IMR-90 (cell line): ENCODE measurements at regions of chr13 and their contacts with region 1.

Region 1: GRCh38 chr13:87274209-87274819 is 396.9 kb upstream of the SLITRK5 start:
- DNase-seq: peak; percentile 47
- ATAC-seq: peak; percentile 83
- H3K4me3 ChIP-seq: no peak overlapping the region
- H3K27ac ChIP-seq: no peak overlapping the region
- H3K4me1 ChIP-seq: no peaks in the 10 kb centered on the region
- H3K27me3 ChIP-seq: no peaks in the 10 kb centered on the region
- CTCF ChIP-seq: peak; percentile 77
- POLR2A ChIP-seq: no peak
- RAD21 ChIP-seq: peak; percentile 83

Region 2: DNA sequence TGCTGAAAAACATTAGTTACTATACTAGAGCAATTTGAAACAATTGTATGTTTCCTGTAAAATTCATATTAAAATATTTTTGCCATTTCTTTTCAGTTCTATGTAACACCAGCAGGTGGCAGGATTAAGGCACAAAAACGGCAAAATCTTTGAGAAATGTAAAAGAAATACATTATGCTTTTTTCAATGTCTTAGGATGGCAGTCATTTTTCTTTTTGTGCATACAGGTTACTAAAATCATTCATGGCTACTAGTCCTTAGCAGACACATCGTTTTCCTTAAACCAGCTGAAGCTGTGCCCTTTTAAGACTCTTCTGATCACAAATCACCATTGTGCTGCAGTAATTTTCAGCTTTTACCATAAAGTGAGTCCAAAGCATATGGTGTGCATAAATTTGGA is 403.9 kb before region 1 on chr13:
- CTCF ChIA-PET with region 1: interaction called, 40 read pairs
- POLR2A ChIA-PET with region 1: interaction called, 4 read pairs
- dilution Hi-C with region 1: no loop called
- in situ Hi-C with region 1: loop called (anchors 5 kb)
- intact Hi-C with region 1: loop called (anchors 1 kb)
- DNase-seq: peak; percentile 43
- ATAC-seq: peak; percentile 42
- H3K4me3 ChIP-seq: no peak overlapping the region
- H3K27ac ChIP-seq: no peak overlapping the region
- H3K4me1 ChIP-seq: no peaks in the 10 kb centered on the region
- H3K27me3 ChIP-seq: no peaks in the 10 kb centered on the region
- CTCF ChIP-seq: peak; percentile 72
- POLR2A ChIP-seq: no peak
- RAD21 ChIP-seq: peak; percentile 71

Region 3: GRCh38 chr13:86974995-86975328 is 299.4 kb before region 1 on chr13:
- CTCF ChIA-PET with region 1: interaction called, 6 read pairs
- POLR2A ChIA-PET with region 1: no interaction called
- dilution Hi-C with region 1: no loop called
- in situ Hi-C with region 1: no loop called
- intact Hi-C with region 1: loop called (anchors 1 kb)
- DNase-seq: no peak
- ATAC-seq: no peak
- H3K4me3 ChIP-seq: no peak overlapping the region
- H3K27ac ChIP-seq: no peak overlapping the region
- H3K4me1 ChIP-seq: 0 out of 2 replicates have a peak, but pooled peaks cover 1% of the 10 kb centered on the region
- H3K27me3 ChIP-seq: no peaks in the 10 kb centered on the region
- CTCF ChIP-seq: 0 out of 2 replicates have a peak, but pooled peaks have one; percentile 19
- POLR2A ChIP-seq: no peak
- RAD21 ChIP-seq: 0 out of 2 replicates have a peak, but pooled peaks have one; percentile 24

Region 4: GRCh38 chr13:87089391-87089790 is 184.9 kb before region 1 on chr13:
- CTCF ChIA-PET with region 1: no interaction called
- POLR2A ChIA-PET with region 1: no interaction called
- dilution Hi-C with region 1: no loop called
- in situ Hi-C with region 1: no loop called
- intact Hi-C with region 1: no loop called
- DNase-seq: peak; percentile 95
- ATAC-seq: peak; percentile 48
- H3K4me3 ChIP-seq: no peak overlapping the region
- H3K27ac ChIP-seq: no peak overlapping the region
- H3K4me1 ChIP-seq: peaks cover 4% of the 10 kb centered on the region; the same call in 1 of the 2 replicates
- H3K27me3 ChIP-seq: no peaks in the 10 kb centered on the region
- CTCF ChIP-seq: no peak
- POLR2A ChIP-seq: no peak
- RAD21 ChIP-seq: no peak

Region 5: DNA sequence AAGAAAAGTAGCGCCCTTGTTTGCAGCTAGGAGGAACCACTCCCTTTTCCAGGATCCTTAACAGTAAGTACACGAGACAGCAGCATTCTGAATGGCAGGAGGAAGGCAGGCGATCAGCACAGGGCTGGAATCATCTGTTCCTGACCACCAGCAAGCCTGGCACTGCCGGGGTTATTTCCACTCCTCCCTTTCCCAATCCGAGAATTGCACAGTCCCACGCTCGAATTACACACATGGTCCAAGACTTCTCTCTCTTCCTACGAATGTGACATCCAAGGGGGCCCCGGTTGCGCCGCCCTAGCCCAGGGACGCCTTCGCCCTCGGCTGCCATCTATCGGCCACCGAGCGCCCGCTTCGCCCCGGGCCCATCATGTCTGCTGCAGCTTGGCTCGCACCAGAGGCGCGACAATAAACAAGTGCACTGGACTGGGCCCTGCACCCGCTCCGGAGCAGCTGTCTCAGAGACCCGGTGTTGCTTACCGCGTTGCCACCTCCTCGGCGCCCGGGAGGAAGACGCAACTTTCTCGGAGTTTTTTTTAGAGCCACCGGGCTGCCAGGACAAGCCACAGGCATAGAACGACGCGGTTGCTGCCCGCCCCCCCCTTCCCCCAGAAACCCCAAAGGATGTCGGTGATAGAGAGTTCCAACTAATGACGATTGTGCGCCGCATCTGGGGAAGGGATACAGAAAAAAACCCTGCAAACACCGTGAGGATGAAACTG is 396.9 kb after region 1 on chr13 and contains the start of gene SLITRK5:
- CTCF ChIA-PET with region 1: no interaction called
- POLR2A ChIA-PET with region 1: no interaction called
- dilution Hi-C with region 1: no loop called
- in situ Hi-C with region 1: no loop called
- intact Hi-C with region 1: loop called (anchors 10 kb)
- DNase-seq: peak; percentile 16
- ATAC-seq: peak; percentile 97
- H3K4me3 ChIP-seq: peak within 1 kb of the TSS; percentile 13
- H3K27ac ChIP-seq: no peak within 1 kb of the TSS
- H3K4me1 ChIP-seq: no peaks in the 10 kb centered on the region
- H3K27me3 ChIP-seq: peaks cover 25% of the 10 kb centered on the region
- CTCF ChIP-seq: peak; percentile 68
- POLR2A ChIP-seq: no peak
- RAD21 ChIP-seq: peak; percentile 29; the same call in 1 of the 2 replicates
- total RNA-seq, gene SLITRK5: under 0.01 TPM in 2 replicates